ENCODE measurements at regions of chr20 and their contacts with region 1.

Region 1: GRCh38 chr20:38057351-38057972 is 23.9 kb downstream of the RPRD1B start:
- DNase-seq: peak; percentile 64 to 86 (median 70)
- H3K4me3 ChIP-seq: no peak overlapping the region
- H3K4me3 Mint-ChIP-seq: no peak overlapping the region
- H3K27ac ChIP-seq: no peak overlapping the region
- H3K27ac Mint-ChIP-seq: peak overlapping the region in 1 of 7 donors; percentile 77
- H3K4me1 ChIP-seq: no peaks in the 10 kb centered on the region
- H3K4me1 Mint-ChIP-seq: peaks cover 7% of the 10 kb centered on the region
- H3K27me3 ChIP-seq: no peaks in the 10 kb centered on the region
- H3K27me3 Mint-ChIP-seq: no peaks in the 10 kb centered on the region
- CTCF ChIP-seq: peak; percentile 100

Region 2: DNA sequence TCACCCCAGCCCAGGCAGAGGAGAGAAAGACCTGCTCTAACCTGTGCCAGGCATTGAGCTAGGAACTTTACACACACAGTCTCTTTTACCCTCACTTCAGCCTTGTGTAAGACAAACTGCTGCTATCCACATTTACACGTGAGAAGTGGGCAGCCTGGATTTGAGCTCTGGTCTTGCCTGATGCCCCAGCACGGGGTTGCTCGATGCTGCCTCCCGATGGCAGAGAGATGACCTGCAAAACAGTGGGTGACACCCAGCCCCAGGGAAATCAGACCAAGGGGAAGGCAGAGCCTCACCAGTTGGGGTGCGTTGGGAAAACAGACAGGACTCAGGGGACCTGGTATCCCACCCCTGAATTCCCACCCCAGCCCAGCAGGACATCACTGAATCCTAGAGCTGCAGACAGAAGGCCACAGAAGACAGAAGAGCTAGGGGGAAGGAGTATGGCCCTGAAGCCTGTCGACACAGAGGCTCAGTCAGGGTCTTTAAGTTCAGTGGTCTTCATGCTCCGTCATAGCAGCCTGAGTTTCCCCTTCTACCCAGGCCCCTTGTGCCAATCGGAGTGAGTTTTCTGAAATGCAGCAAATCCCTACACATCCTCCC is 247.5 kb after region 1 on chr20:
- intact Hi-C with region 1: loop called in 1 of 2 experiments (anchors 10 kb)
- DNase-seq: peak; percentile 66 to 77 (median 69)
- H3K4me3 ChIP-seq: peak overlapping the region in 1 of 3 experiments; percentile 65
- H3K4me3 Mint-ChIP-seq: peak overlapping the region; percentile 64 to 81
- H3K27ac ChIP-seq: peak overlapping the region; percentile 53 to 76
- H3K27ac Mint-ChIP-seq: peak overlapping the region; percentile 63 to 94 (median 86)
- H3K4me1 ChIP-seq: peaks cover 75 to 79% of the 10 kb centered on the region in 2 donors
- H3K4me1 Mint-ChIP-seq: peaks cover 81% of the 10 kb centered on the region
- H3K27me3 ChIP-seq: peaks cover 2 to 6% of the 10 kb centered on the region in 2 donors
- H3K27me3 Mint-ChIP-seq: peaks cover 7 to 20% (median 14%) of the 10 kb centered on the region in 3 donors
- CTCF ChIP-seq: peak; percentile 88

Region 3: DNA sequence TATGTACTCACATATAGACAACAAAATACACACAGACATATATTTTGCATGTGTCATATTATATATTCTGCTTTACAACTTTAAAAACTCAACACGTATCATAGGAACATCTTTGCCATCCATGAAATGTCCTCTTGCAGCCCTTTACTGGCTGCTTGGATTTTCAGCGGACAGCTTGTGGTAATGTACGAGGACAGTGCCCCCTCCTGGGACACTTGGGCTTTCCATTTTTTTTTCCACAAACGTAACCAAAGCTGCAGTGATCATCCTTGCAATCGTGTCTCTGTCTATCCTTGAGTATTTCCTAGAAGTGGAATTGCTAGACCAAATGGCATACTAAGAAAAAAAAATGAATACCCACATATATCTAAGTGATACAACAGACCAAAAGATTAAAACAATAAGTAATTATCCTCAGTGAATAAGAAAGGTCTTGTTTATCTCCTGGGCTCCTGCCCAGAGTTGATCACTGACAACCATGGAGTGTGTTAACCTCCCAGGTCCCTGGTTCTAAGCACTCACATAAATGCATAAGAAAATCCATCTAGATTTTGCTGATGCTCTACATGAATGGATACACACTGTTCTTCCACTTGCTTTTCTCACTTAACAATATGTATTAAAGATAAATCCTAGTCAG is 264.6 kb after region 1 on chr20:
- intact Hi-C with region 1: loop called in 1 of 2 experiments (anchors 5 kb)
- DNase-seq: peak; percentile 21 to 50 (median 49)
- H3K4me3 ChIP-seq: no peak overlapping the region
- H3K4me3 Mint-ChIP-seq: no peak overlapping the region
- H3K27ac ChIP-seq: no peak overlapping the region
- H3K27ac Mint-ChIP-seq: no peak overlapping the region
- H3K4me1 ChIP-seq: no peaks in the 10 kb centered on the region
- H3K4me1 Mint-ChIP-seq: peaks cover 10% of the 10 kb centered on the region
- H3K27me3 ChIP-seq: peaks cover 0 to 3% of the 10 kb centered on the region in 2 donors
- H3K27me3 Mint-ChIP-seq: peaks cover 9 to 32% (median 16%) of the 10 kb centered on the region in 3 donors
- CTCF ChIP-seq: peak; percentile 76

Region 4: GRCh38 chr20:38412877-38413577 is 355.6 kb after region 1 on chr20:
- intact Hi-C with region 1: loop called in 1 of 2 experiments (anchors 2 kb)
- DNase-seq: no peak
- H3K4me3 ChIP-seq: no peak overlapping the region
- H3K4me3 Mint-ChIP-seq: no peak overlapping the region
- H3K27ac ChIP-seq: no peak overlapping the region
- H3K27ac Mint-ChIP-seq: no peak overlapping the region
- H3K4me1 ChIP-seq: no peaks in the 10 kb centered on the region
- H3K4me1 Mint-ChIP-seq: no peaks in the 10 kb centered on the region
- H3K27me3 ChIP-seq: no peaks in the 10 kb centered on the region
- H3K27me3 Mint-ChIP-seq: peaks cover 0 to 3% (median 0%) of the 10 kb centered on the region in 3 donors
- CTCF ChIP-seq: no peak